Transverse colon (tissue), 4 donors: ENCODE measurements at regions of chr1 and their contacts with region 1.

Region 1: GRCh38 chr1:203440771-203441170 is 34.8 kb upstream of the PRELP start:
- DNase-seq: peak; percentile 83
- H3K4me3 ChIP-seq: no peak overlapping the region
- H3K27ac ChIP-seq: peak overlapping the region; percentile 24 to 47 (median 26)
- H3K4me1 ChIP-seq: peaks cover 17 to 29% (median 19%) of the 10 kb centered on the region in 4 donors
- H3K27me3 ChIP-seq: no peaks in the 10 kb centered on the region
- CTCF ChIP-seq: peak; percentile 61 to 78 (median 71)
- EP300 ChIP-seq: no peak
- POLR2A ChIP-seq: no peak

Region 2: DNA sequence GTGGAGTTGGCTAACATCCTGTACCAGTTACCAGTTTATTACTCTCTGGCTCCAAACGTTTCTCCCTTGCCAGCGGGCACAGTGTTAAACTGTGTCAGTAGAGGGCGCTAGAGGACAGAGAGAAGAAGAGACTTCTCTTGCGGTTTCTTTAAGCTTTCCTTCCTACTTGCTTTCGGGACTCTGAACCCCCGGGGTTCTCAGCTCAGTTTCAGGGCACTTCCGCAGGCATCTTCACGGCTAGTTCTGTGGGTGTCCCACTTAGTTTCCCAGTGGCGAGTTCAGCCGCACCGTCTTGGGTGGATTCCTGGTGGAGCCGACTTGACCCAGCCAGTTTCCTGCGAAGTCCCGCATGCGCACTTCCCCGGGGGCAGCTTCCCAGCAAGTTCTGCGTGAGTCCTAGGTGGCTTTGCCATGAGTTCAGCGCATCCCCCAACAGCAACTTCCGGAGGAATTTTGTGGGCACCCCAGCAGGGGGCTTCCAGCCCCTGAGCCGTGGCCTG is 173.4 kb before region 1 on chr1:
- in situ Hi-C with region 1: loop called in 2 of 4 experiments (anchors 10 to 25 kb)
- intact Hi-C with region 1: no loop called
- DNase-seq: peak; percentile 90
- H3K4me3 ChIP-seq: peak overlapping the region; percentile 40 to 68 (median 46)
- H3K27ac ChIP-seq: peak overlapping the region; percentile 76 to 87 (median 80)
- H3K4me1 ChIP-seq: peaks cover 2 to 22% (median 8%) of the 10 kb centered on the region in 4 donors
- H3K27me3 ChIP-seq: no peaks in the 10 kb centered on the region
- CTCF ChIP-seq: peak; percentile 94 to 97 (median 95)
- EP300 ChIP-seq: no peak
- POLR2A ChIP-seq: no peak

Region 3: DNA sequence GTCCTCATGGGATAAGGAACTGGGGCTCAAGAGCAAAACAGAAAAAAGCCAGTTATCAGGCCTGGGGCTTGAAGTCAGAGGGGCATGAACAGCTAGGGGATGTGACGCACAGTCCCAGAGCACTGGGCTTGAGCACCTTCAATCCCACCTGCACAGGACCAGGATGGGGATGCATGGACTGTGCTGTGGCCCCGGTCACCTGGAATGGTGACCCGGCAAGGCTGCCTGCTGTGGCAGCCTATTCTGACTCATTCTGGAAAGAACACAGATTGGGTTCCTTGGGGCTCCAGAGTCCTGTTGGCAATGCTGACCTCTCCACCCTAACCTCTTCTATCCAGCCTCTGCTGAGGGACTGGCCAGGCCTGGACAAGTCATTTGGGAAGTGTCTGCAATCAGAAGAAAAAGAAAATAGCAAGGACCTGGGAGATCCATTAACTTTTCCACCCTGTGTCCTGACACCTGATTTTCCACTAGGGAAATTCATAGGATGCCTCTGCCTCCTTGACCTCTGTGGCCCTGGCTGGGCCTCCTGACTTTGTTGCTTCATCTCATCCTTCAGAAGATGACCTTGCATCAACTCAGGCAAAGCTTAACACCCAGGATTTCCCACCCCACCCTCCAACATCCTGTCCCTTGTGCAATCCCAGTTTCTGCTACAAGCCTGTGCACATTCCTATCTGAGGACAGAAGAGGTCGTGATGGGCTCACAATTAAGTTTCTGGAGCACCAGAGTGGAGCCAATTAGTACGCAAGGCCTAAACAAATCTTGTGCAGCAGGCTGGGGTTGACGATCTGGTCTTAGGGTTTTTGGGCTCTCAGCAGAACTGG is 71.9 kb before region 1 on chr1:
- in situ Hi-C with region 1: no loop called
- intact Hi-C with region 1: loop called (anchors 10 kb)
- DNase-seq: peak; percentile 54
- H3K4me3 ChIP-seq: no peak overlapping the region
- H3K27ac ChIP-seq: peak overlapping the region in 2 of 4 donors; percentile 4 to 5
- H3K4me1 ChIP-seq: peaks cover 0 to 36% (median 11%) of the 10 kb centered on the region in 4 donors
- H3K27me3 ChIP-seq: no peaks in the 10 kb centered on the region
- CTCF ChIP-seq: peak in 1 of 5 experiments; percentile 33
- EP300 ChIP-seq: no peak
- POLR2A ChIP-seq: no peak

Region 4: GRCh38 chr1:203486618-203487370 is 46.0 kb after region 1 on chr1:
- in situ Hi-C with region 1: no loop called
- intact Hi-C with region 1: loop called (anchors 5 kb)
- DNase-seq: no peak
- H3K4me3 ChIP-seq: peak overlapping the region in 2 of 4 donors; percentile 19 to 35
- H3K27ac ChIP-seq: peak overlapping the region; percentile 67 to 82 (median 73)
- H3K4me1 ChIP-seq: peaks cover 3 to 22% (median 4%) of the 10 kb centered on the region in 4 donors
- H3K27me3 ChIP-seq: no peaks in the 10 kb centered on the region
- CTCF ChIP-seq: no peak
- EP300 ChIP-seq: no peak
- POLR2A ChIP-seq: no peak